WTC11 (cell line): ENCODE measurements at regions of chrX and their contacts with region 1.

Region 1: DNA sequence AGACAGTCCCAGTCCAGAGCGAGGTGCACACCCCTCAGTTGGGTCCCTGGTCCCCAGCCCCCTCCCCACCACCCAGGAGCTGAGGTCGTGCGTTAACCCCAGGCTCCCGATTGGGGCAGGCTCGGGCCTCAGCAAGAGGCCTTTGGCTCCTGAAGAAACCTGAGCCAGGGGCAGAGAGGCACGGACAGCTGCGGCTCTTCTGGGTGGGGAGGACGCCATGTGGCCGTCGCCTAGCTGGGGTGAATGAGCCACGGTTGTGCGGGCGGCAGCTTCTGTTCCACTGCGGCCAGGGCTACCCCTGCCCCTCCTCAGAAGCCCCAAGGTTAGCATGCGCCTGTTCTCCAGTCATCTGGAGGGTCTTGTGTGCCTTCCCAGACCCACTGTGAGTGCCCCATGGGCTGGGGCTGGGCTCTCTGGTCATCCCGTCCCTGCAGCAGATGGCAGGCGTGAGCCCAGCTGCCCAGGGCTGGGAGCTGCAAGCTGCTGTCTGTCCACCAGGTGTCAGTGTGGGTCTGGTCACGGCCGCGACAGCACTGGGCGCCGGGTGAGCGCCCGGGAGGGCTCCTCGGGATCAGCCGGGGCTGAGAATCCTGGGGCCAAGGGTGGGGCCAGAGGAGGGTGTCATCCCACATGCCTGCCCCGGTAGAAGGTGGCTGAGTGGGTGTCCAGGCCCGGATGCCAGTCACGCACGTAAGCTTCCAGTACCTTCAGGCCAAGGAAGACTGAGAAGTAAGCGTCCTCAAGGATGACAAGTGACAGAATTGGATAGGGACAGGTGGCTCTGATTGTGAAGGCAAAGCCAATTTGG is 21.9 kb downstream of the ATP2B3 start:
- DNase-seq: peak; percentile 76
- ATAC-seq: peak; percentile 93
- H3K4me3 Mint-ChIP-seq: no peak overlapping the region
- H3K27ac Mint-ChIP-seq: no peak overlapping the region
- H3K4me1 Mint-ChIP-seq: no peaks in the 10 kb centered on the region
- H3K27me3 Mint-ChIP-seq: no peaks in the 10 kb centered on the region
- CTCF ChIP-seq: no peak; the same call in 1 of the 2 replicates

Region 2: DNA sequence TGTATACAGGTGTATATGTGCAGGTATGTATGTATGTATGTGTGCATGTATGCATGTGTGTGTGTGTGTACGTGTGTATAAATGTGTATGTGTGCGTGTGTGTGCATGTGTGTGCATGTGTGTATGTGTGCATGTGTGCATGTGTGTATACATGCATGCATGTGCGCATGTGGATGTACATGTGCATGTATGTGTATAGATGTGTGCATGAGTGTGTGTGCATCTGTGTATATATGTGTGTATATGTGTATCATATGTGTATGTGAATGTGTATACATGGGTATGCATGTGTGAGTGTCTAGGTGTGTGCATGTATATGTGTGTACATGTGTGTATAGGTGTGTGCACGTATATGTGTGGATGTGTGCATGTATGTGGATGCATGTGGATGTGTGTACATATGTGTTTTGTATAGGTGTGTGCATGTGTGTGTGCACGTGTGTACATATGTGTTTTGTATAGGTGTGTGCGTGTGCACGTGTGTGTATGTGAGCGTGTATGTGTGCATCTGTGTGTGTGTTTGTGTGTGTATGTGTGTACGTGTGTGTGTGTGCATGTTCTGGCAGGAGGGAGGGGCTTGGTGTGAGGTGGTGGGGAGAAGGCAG is 38.6 kb before region 1 on chrX:
- CTCF ChIA-PET with region 1: no interaction called
- POLR2A ChIA-PET with region 1: no interaction called
- DNase-seq: no peak
- ATAC-seq: no peak
- H3K4me3 Mint-ChIP-seq: no peak overlapping the region
- H3K27ac Mint-ChIP-seq: peak overlapping the region; percentile 49; the same call in 1 of the 2 replicates
- H3K4me1 Mint-ChIP-seq: no peaks in the 10 kb centered on the region
- H3K27me3 Mint-ChIP-seq: no peaks in the 10 kb centered on the region
- CTCF ChIP-seq: no peak

Region 3: GRCh38 chrX:153517423-153517822 is 22.0 kb before region 1 on chrX and contains the start of gene ATP2B3:
- CTCF ChIA-PET with region 1: interaction called, 15 read pairs
- POLR2A ChIA-PET with region 1: no interaction called
- DNase-seq: no peak
- ATAC-seq: no peak; the same call in 1 of the 2 replicates
- H3K4me3 Mint-ChIP-seq: peak within 1 kb of the TSS; percentile 73
- H3K27ac Mint-ChIP-seq: no peak within 1 kb of the TSS
- H3K4me1 Mint-ChIP-seq: 0 out of 2 replicates have a peak, but pooled peaks cover 3% of the 10 kb centered on the region
- H3K27me3 Mint-ChIP-seq: peaks cover 37% of the 10 kb centered on the region
- CTCF ChIP-seq: no peak
- total RNA-seq, gene ATP2B3: 0.28 to 0.32 TPM (median 0.30 TPM) in 3 replicates

Region 4: DNA sequence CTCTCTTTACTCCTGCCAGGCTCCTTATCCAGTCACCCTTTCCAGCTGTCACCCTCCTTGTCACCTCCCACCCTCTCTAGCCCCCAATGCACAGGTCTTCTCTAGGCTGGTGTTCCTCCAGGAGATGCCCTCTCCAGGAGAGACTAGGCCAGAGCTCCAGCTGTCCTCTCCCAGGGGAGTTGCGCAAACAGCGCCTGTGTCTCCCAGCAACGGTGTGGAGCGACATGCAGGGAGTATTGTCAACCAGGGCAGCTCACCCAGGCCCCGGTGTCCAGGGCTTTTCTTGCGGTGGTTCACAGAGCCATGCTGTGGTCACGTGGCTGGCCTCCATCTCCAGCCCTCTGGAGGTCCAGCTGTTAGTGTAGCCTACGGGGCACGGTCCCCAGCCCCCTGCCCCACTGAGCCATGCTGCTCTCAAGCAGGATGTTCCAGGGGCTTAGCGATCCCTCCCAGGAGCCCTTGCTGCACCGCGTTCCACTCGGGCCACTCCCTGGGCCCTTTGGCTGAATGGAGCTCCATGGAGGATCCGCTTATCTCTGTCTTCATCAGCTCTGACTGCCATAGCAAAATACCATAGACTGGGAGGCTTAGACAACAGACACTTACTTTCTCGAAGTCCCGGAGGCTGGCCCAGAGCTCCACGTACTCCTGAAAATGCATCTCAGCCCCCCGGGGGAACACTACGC is 24.8 kb after region 1 on chrX:
- CTCF ChIA-PET with region 1: interaction called, 16 read pairs
- POLR2A ChIA-PET with region 1: no interaction called
- DNase-seq: no peak
- ATAC-seq: no peak
- H3K4me3 Mint-ChIP-seq: no peak overlapping the region
- H3K27ac Mint-ChIP-seq: no peak overlapping the region
- H3K4me1 Mint-ChIP-seq: peaks cover 8% of the 10 kb centered on the region
- H3K27me3 Mint-ChIP-seq: no peaks in the 10 kb centered on the region; the same call in 1 of the 2 replicates
- CTCF ChIP-seq: no peak

Region 5: GRCh38 chrX:153609917-153610428 is 70.6 kb after region 1 on chrX:
- CTCF ChIA-PET with region 1: interaction called, 10 read pairs
- POLR2A ChIA-PET with region 1: no interaction called
- DNase-seq: peak; percentile 87
- ATAC-seq: peak; percentile 94
- H3K4me3 Mint-ChIP-seq: peak overlapping the region; percentile 64
- H3K27ac Mint-ChIP-seq: no peak overlapping the region
- H3K4me1 Mint-ChIP-seq: no peaks in the 10 kb centered on the region
- H3K27me3 Mint-ChIP-seq: peaks cover 52% of the 10 kb centered on the region
- CTCF ChIP-seq: peak; percentile 59

Region 6: GRCh38 chrX:153643431-153644351 is 104.3 kb after region 1 on chrX:
- CTCF ChIA-PET with region 1: interaction called, 20 read pairs
- POLR2A ChIA-PET with region 1: no interaction called
- DNase-seq: no peak
- ATAC-seq: no peak
- H3K4me3 Mint-ChIP-seq: peak overlapping the region; percentile 63
- H3K27ac Mint-ChIP-seq: no peak overlapping the region
- H3K4me1 Mint-ChIP-seq: peaks cover 10% of the 10 kb centered on the region
- H3K27me3 Mint-ChIP-seq: peaks cover 73% of the 10 kb centered on the region
- CTCF ChIP-seq: no peak

Region 7: GRCh38 chrX:153687121-153688039 is 148.0 kb after region 1 on chrX and contains the start of gene SLC6A8:
- CTCF ChIA-PET with region 1: interaction called, 12 read pairs
- POLR2A ChIA-PET with region 1: no interaction called
- DNase-seq: peak; percentile 65
- ATAC-seq: peak; percentile 38
- H3K4me3 Mint-ChIP-seq: peak within 1 kb of the TSS; percentile 61
- H3K27ac Mint-ChIP-seq: peak within 1 kb of the TSS; percentile 85
- H3K4me1 Mint-ChIP-seq: peaks cover 18% of the 10 kb centered on the region
- H3K27me3 Mint-ChIP-seq: no peaks in the 10 kb centered on the region; the same call in 1 of the 2 replicates
- CTCF ChIP-seq: peak; percentile 31; the same call in 1 of the 2 replicates
- total RNA-seq, gene SLC6A8: 102 to 112 TPM (median 110 TPM) in 3 replicates

Region 8: GRCh38 chrX:154097597-154098541 is 558.5 kb after region 1 on chrX and contains the start of gene MECP2:
- CTCF ChIA-PET with region 1: no interaction called
- POLR2A ChIA-PET with region 1: no interaction called
- DNase-seq: peak; percentile 93
- ATAC-seq: peak; percentile 88
- H3K4me3 Mint-ChIP-seq: peak within 1 kb of the TSS; percentile 80
- H3K27ac Mint-ChIP-seq: peak within 1 kb of the TSS; percentile 71
- H3K4me1 Mint-ChIP-seq: peaks cover 40% of the 10 kb centered on the region
- H3K27me3 Mint-ChIP-seq: no peaks in the 10 kb centered on the region
- CTCF ChIP-seq: no peak
- total RNA-seq, gene MECP2: 28.7 to 36.2 TPM (median 33.7 TPM) in 3 replicates